Activated CD4-positive, alpha-beta T cell treated with anti-CD3 and anti-CD28 coated beads for 36 hours (primary cell): ENCODE measurements at regions of chr1 and their contacts with region 1.

Region 1: GRCh38 chr1:248622570-248623001 is 12.3 kb downstream of the OR2T11 start:
- DNase-seq: peak; percentile 11
- ATAC-seq: peak; percentile 80
- H3K4me3 Mint-ChIP-seq: no peak overlapping the region
- H3K27ac Mint-ChIP-seq: no peak overlapping the region
- H3K4me1 Mint-ChIP-seq: no peaks in the 10 kb centered on the region
- H3K27me3 Mint-ChIP-seq: no peaks in the 10 kb centered on the region

Region 2: DNA sequence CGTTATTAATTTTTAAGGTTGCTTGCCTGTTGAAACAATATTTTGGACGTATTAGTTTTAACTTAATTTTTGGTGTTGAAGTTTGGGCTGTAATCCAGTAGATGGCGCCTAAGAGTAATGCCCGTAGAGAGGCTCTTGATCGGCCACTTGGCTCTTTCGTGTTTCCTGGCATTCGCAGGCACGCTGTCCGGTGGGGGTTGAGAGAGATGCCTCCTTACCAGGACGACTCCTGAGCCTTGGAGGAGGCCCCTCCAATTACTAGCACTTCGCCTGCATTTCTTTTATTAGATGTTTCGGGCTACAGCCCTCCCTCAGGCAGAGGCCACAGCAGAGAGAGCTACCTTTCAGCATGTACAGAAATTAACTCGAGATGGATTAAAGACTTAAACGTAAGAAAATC is 379.4 kb before region 1 on chr1:
- CTCF ChIA-PET with region 1: no interaction called
- POLR2A ChIA-PET with region 1: no interaction called
- intact Hi-C with region 1: loop called in 1 of 2 experiments (anchors 5 kb)
- DNase-seq: peak; percentile 42
- ATAC-seq: peak; percentile 55
- H3K4me3 Mint-ChIP-seq: no peak overlapping the region
- H3K27ac Mint-ChIP-seq: no peak overlapping the region
- H3K4me1 Mint-ChIP-seq: peaks cover 2% of the 10 kb centered on the region
- H3K27me3 Mint-ChIP-seq: peaks cover 8% of the 10 kb centered on the region

Region 3: GRCh38 chr1:248404024-248404423 is 218.6 kb before region 1 on chr1:
- CTCF ChIA-PET with region 1: no interaction called
- POLR2A ChIA-PET with region 1: no interaction called
- intact Hi-C with region 1: loop called in 1 of 2 experiments (anchors 5 kb)
- DNase-seq: no peak
- ATAC-seq: no peak
- H3K4me3 Mint-ChIP-seq: no peak overlapping the region
- H3K27ac Mint-ChIP-seq: no peak overlapping the region
- H3K4me1 Mint-ChIP-seq: no peaks in the 10 kb centered on the region
- H3K27me3 Mint-ChIP-seq: no peaks in the 10 kb centered on the region

Region 4: GRCh38 chr1:248611883-248612414 is 10.6 kb before region 1 on chr1:
- CTCF ChIA-PET with region 1: interaction called, 10 read pairs
- POLR2A ChIA-PET with region 1: no interaction called
- intact Hi-C with region 1: no loop called
- DNase-seq: peak; percentile 37
- ATAC-seq: peak; percentile 86
- H3K4me3 Mint-ChIP-seq: no peak overlapping the region
- H3K27ac Mint-ChIP-seq: no peak overlapping the region
- H3K4me1 Mint-ChIP-seq: peaks cover 20% of the 10 kb centered on the region
- H3K27me3 Mint-ChIP-seq: no peaks in the 10 kb centered on the region

Region 5: GRCh38 chr1:248686815-248687214 is 64.2 kb after region 1 on chr1:
- CTCF ChIA-PET with region 1: interaction called, 5 read pairs
- POLR2A ChIA-PET with region 1: no interaction called
- intact Hi-C with region 1: loop called (anchors 2 to 5 kb)
- DNase-seq: peak; percentile 34
- ATAC-seq: peak; percentile 53
- H3K4me3 Mint-ChIP-seq: no peak overlapping the region
- H3K27ac Mint-ChIP-seq: no peak overlapping the region
- H3K4me1 Mint-ChIP-seq: peaks cover 7% of the 10 kb centered on the region
- H3K27me3 Mint-ChIP-seq: peaks cover 3% of the 10 kb centered on the region

Region 6: GRCh38 chr1:248807067-248807737 is 184.6 kb after region 1 on chr1:
- CTCF ChIA-PET with region 1: interaction called, 19 read pairs
- POLR2A ChIA-PET with region 1: no interaction called
- intact Hi-C with region 1: loop called (anchors 1 kb)
- DNase-seq: peak; percentile 81
- ATAC-seq: peak; percentile 93
- H3K4me3 Mint-ChIP-seq: no peak overlapping the region
- H3K27ac Mint-ChIP-seq: no peak overlapping the region
- H3K4me1 Mint-ChIP-seq: no peaks in the 10 kb centered on the region
- H3K27me3 Mint-ChIP-seq: peaks cover 4% of the 10 kb centered on the region